A673 (cell line): ENCODE measurements at regions of chr10 and their contacts with region 1.

Region 1: DNA sequence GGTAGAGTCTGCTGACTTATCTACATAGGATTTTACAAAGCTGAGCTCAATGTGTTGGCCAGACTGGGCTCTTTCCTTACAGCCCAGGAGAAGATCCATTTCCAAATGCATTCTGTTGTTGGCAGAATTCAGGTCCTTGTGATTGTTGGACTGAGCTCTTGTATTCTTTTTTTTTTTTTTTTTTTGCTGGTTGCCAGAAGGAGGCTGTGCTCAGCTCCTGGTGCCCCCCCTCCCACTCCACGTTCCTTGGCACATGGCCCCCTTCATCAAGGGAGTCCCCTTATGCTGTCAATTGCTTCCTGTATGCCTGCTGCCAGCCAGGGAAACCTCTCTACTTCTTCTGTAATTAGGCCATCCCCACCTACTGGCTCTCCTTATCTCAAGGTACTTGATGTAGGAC is 518.1 kb upstream of the AKR1E2 start:
- DNase-seq: no peak
- H3K4me3 ChIP-seq: no peak overlapping the region
- H3K27ac ChIP-seq: no peak overlapping the region
- H3K4me1 ChIP-seq: no peaks in the 10 kb centered on the region
- H3K27me3 ChIP-seq: peaks cover 12% of the 10 kb centered on the region
- CTCF ChIP-seq: no peak

Region 2: GRCh38 chr10:4333459-4333894 is 25.6 kb after region 1 on chr10:
- CTCF ChIA-PET with region 1: no interaction called
- POLR2A ChIA-PET with region 1: interaction called, 10 read pairs
- intact Hi-C with region 1: no loop called
- DNase-seq: no peak
- H3K4me3 ChIP-seq: no peak overlapping the region
- H3K27ac ChIP-seq: no peak overlapping the region
- H3K4me1 ChIP-seq: no peaks in the 10 kb centered on the region
- H3K27me3 ChIP-seq: no peaks in the 10 kb centered on the region
- CTCF ChIP-seq: no peak